PC-9 (cell line): ENCODE measurements at regions of chr5 and their contacts with region 1.

Region 1: GRCh38 chr5:61055434-61056006 is 106.7 kb downstream of the SMIM15 start:
- DNase-seq: peak in 1 of 2 experiments; percentile 42
- H3K4me3 ChIP-seq: no peak overlapping the region
- H3K27ac ChIP-seq: no peak overlapping the region
- H3K4me1 ChIP-seq: peaks cover 29% of the 10 kb centered on the region
- H3K27me3 ChIP-seq: no peaks in the 10 kb centered on the region
- CTCF ChIP-seq: peak; percentile 75

Region 2: DNA sequence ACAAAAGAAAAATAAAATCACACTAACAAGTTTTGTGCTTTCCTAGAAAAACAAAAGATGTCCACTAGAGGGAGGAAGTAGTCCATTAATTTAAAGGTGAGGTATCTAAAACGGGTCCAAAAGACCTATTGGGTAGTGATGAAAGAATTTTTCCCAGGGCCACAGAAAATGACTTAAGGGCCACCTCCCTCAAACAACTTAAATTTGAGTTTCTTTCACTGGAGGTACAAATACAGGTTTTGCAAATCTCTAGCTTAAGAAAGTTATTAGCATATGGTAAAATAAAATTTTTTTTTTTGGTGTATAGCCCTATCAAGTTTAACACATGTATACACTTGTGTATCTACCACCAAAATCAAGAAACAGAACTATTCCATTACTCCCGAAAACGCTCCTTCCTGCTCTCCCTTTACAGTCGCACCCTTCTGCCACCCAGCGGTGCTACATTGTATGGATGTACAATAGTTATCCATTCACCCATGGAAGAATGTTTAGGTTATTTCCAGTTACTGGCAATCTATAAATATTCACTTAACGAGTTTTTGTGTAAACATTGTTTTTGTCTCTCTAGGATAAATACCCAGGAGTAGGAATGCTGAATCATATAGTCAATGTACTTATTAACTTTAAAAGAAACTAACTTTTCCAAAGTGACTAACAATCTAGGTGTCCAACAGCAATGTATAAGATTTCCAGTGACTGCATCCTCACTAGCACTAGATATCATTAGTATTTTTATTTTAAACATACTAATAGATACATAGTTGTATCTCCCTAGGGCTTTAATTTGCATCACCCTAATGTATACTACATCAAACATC is 377.5 kb before region 1 on chr5:
- CTCF ChIA-PET with region 1: no interaction called
- POLR2A ChIA-PET with region 1: no interaction called
- intact Hi-C with region 1: loop called (anchors 10 kb)
- DNase-seq: no peak
- H3K4me3 ChIP-seq: no peak overlapping the region
- H3K27ac ChIP-seq: no peak overlapping the region
- H3K4me1 ChIP-seq: no peaks in the 10 kb centered on the region
- H3K27me3 ChIP-seq: no peaks in the 10 kb centered on the region
- CTCF ChIP-seq: peak; percentile 75

Region 3: DNA sequence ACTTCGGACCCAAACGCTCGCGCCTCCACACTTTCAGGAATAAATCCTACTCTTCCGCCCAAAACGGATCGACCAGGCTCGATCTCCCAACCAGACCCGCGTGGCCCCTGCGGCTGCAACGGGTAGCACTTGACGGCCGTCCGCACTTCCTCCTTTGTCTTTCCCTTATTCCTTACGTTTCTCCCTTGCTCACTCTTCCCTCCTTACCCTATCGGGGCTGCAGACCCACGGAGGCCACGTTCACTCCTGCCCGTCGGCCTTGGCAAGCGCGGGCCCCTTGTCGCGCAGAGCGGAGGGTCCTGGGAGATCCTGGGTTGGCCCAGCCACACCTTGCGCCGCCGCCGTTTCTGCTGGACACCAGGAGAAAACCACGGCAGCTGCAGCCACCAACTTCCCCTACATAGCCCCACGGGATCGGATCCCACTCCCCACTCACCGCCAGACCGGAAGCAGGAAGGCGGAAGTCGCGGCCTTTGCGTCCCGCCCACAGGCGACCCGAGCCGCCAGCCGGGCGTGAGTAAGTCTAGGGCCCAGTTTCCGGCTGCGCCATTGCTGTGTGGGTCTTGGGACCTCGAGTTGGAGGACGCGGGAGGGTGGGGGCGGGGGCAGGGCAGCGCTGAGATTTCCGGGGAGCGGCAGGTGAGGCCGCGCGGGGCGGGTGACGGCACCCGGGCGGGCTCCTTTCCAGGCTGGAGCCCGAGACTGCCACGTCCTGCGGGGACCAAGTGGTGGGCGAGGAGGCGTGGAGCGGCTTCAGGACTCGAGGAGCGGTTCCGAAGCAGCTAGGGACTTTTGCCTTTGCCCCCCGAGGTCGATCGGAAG is 106.7 kb after region 1 on chr5 and contains the start of gene SMIM15:
- CTCF ChIA-PET with region 1: no interaction called
- POLR2A ChIA-PET with region 1: no interaction called
- intact Hi-C with region 1: loop called (anchors 5 kb)
- DNase-seq: peak; percentile 81 to 85
- H3K4me3 ChIP-seq: peak within 1 kb of the TSS; percentile 95
- H3K27ac ChIP-seq: peak within 1 kb of the TSS; percentile 76
- H3K4me1 ChIP-seq: peaks cover 30% of the 10 kb centered on the region
- H3K27me3 ChIP-seq: no peaks in the 10 kb centered on the region
- CTCF ChIP-seq: no peak
- total RNA-seq, gene SMIM15: 50.6 and 58.2 TPM in 2 replicates

Region 4: GRCh38 chr5:61408476-61409168 is 353.1 kb after region 1 on chr5:
- CTCF ChIA-PET with region 1: no interaction called
- POLR2A ChIA-PET with region 1: no interaction called
- intact Hi-C with region 1: loop called (anchors 2 kb)
- DNase-seq: peak; percentile 98 to 99
- H3K4me3 ChIP-seq: peak overlapping the region; percentile 49; the same call in 1 of the 2 replicates
- H3K27ac ChIP-seq: peak overlapping the region; percentile 99
- H3K4me1 ChIP-seq: peaks cover 27% of the 10 kb centered on the region
- H3K27me3 ChIP-seq: no peaks in the 10 kb centered on the region
- CTCF ChIP-seq: no peak

Region 5: GRCh38 chr5:61817472-61818326 is 762.2 kb after region 1 on chr5:
- CTCF ChIA-PET with region 1: interaction called, 3 read pairs
- POLR2A ChIA-PET with region 1: no interaction called
- intact Hi-C with region 1: loop called (anchors 5 kb)
- DNase-seq: peak in 1 of 2 experiments; percentile 19
- H3K4me3 ChIP-seq: no peak overlapping the region
- H3K27ac ChIP-seq: no peak overlapping the region
- H3K4me1 ChIP-seq: no peaks in the 10 kb centered on the region
- H3K27me3 ChIP-seq: peaks cover 30% of the 10 kb centered on the region; the same call in 1 of the 2 replicates
- CTCF ChIP-seq: peak; percentile 57

Region 6: GRCh38 chr5:62126090-62126489 is 1070.6 kb after region 1 on chr5:
- CTCF ChIA-PET with region 1: interaction called, 10 read pairs
- POLR2A ChIA-PET with region 1: no interaction called
- intact Hi-C with region 1: no loop called
- DNase-seq: no peak
- H3K4me3 ChIP-seq: no peak overlapping the region
- H3K27ac ChIP-seq: no peak overlapping the region
- H3K4me1 ChIP-seq: no peaks in the 10 kb centered on the region
- H3K27me3 ChIP-seq: 0 out of 2 replicates have a peak, but pooled peaks cover 2% of the 10 kb centered on the region
- CTCF ChIP-seq: no peak